ENCODE measurements at regions of chr22 and their contacts with region 1.

Region 1: DNA sequence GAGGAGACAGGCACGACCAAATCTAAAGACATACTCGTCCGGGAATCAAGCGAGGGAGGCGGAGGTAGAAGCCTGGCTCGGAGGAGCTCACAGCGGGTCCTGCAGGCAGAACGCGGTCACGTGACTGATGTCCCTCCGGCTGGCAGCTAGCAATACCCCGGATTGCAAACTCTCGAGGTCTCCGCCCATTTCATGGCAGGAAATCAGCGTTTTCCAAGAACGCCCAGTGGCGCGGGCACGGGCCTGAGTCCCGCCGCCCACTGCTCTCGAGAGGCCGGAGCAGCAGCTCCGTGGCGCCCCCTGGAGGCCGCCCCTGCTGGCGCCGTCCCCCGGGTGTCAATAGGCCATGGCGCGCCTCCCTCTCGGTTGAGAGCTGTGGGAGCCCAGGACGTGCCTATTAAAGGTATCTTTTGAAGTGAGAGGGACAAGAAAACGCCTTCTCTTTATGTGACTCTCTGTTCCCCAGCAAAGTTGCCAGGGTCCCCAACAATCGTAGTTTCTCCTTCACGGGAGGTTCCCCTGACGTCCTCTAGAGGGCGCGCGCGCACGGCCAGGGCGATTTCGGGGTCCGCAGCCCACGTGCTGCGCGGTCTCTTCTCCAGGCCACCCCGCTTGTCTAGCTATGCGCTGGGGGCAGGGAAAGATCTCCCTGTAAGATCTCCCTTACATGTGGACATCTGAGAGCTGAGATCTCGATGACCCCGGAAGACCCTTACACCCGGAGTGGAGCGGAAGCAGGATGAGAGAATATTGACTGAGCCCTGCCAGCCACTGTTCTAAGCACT is 37.3 kb upstream of the RBFOX2 start:
- DNase-seq: peak; percentile 91
- H3K4me3 Mint-ChIP-seq: peak overlapping the region; percentile 75
- H3K27ac Mint-ChIP-seq: peak overlapping the region; percentile 82
- H3K4me1 Mint-ChIP-seq: no peaks in the 10 kb centered on the region
- H3K27me3 Mint-ChIP-seq: no peaks in the 10 kb centered on the region
- CTCF ChIP-seq: peak; percentile 99

Region 2: DNA sequence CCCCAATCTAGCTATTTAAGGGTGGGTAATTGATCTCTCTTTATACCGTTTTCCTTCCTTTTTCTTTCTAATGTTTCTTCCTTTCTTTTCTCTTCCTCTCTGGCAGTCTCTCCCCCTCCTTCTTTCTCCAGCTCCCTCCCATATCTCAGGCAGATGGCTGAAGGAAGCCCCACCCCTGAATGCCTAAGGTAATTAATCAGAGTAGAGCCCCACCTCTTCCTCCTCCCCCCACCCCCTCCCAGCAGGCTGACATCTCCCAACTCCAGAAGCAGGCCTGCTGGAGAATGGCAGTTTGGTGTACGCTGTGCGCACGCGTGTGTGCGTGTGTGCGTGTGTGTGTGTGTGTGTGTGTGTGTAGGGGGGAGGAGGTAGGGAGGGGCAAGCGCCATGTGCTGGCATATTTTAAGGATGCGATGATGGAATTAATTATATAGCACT is 225.6 kb before region 1 on chr22:
- CTCF ChIA-PET with region 1: interaction called, 4 read pairs
- POLR2A ChIA-PET with region 1: interaction called, 3 read pairs
- intact Hi-C with region 1: loop called (anchors 5 kb)
- DNase-seq: peak; percentile 97
- H3K4me3 Mint-ChIP-seq: peak overlapping the region; percentile 84
- H3K27ac Mint-ChIP-seq: peak overlapping the region; percentile 83
- H3K4me1 Mint-ChIP-seq: peaks cover 55% of the 10 kb centered on the region
- H3K27me3 Mint-ChIP-seq: no peaks in the 10 kb centered on the region
- CTCF ChIP-seq: no peak

Region 3: DNA sequence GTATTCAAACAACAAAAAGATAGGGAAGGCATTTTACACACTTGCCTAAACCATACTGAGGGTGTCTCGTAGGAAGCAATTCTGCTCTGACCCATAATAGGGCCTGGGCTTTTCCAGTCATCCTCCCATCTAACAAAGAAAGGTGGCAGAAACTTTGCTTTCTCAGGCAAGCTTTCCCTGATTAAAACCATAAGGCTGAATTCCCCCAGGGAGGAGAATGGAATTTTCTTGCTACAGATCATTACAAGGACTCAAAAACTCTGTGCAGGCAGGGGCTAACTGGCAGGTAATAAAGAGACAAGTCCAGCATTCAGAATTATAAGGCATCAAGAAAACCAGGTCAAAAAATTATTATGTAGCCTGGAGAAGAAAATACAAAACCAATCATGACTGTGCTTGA is 127.7 kb before region 1 on chr22:
- CTCF ChIA-PET with region 1: interaction called, 21 read pairs
- POLR2A ChIA-PET with region 1: no interaction called
- intact Hi-C with region 1: no loop called
- DNase-seq: no peak
- H3K4me3 Mint-ChIP-seq: no peak overlapping the region
- H3K27ac Mint-ChIP-seq: no peak overlapping the region
- H3K4me1 Mint-ChIP-seq: no peaks in the 10 kb centered on the region
- H3K27me3 Mint-ChIP-seq: no peaks in the 10 kb centered on the region
- CTCF ChIP-seq: no peak

Region 4: GRCh38 chr22:36017651-36018091 is 48.3 kb before region 1 on chr22:
- CTCF ChIA-PET with region 1: interaction called, 28 read pairs
- POLR2A ChIA-PET with region 1: no interaction called
- intact Hi-C with region 1: no loop called
- DNase-seq: no peak
- H3K4me3 Mint-ChIP-seq: no peak overlapping the region
- H3K27ac Mint-ChIP-seq: no peak overlapping the region
- H3K4me1 Mint-ChIP-seq: peaks cover 11% of the 10 kb centered on the region
- H3K27me3 Mint-ChIP-seq: no peaks in the 10 kb centered on the region
- CTCF ChIP-seq: no peak

Region 5: DNA sequence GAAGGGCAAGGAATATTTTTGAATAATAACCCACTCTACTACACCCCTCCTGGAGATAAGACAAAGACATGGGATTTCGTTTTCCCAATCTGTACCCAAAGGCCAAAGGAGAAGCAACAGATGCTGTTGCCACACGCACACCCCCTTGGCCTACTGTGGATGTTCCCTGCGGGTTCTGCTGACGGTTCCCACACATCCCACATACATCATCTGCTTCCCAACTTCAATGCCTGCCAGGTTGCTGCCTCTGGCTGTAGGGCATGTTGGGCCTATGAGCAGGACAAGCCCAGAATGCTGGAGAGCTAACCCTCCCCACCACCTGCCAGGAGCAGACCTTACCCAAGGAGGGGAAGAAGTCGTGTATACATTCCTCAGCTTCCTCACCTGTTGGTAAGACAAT is 23.7 kb before region 1 on chr22:
- CTCF ChIA-PET with region 1: interaction called, 18 read pairs
- POLR2A ChIA-PET with region 1: no interaction called
- intact Hi-C with region 1: no loop called
- DNase-seq: no peak
- H3K4me3 Mint-ChIP-seq: no peak overlapping the region
- H3K27ac Mint-ChIP-seq: no peak overlapping the region
- H3K4me1 Mint-ChIP-seq: no peaks in the 10 kb centered on the region
- H3K27me3 Mint-ChIP-seq: peaks cover 6% of the 10 kb centered on the region
- CTCF ChIP-seq: no peak

Region 6: GRCh38 chr22:36088292-36088691 is 22.3 kb after region 1 on chr22:
- CTCF ChIA-PET with region 1: interaction called, 47 read pairs
- POLR2A ChIA-PET with region 1: no interaction called
- intact Hi-C with region 1: no loop called
- DNase-seq: no peak
- H3K4me3 Mint-ChIP-seq: no peak overlapping the region
- H3K27ac Mint-ChIP-seq: no peak overlapping the region
- H3K4me1 Mint-ChIP-seq: peaks cover 6% of the 10 kb centered on the region
- H3K27me3 Mint-ChIP-seq: no peaks in the 10 kb centered on the region
- CTCF ChIP-seq: no peak

Region 7: DNA sequence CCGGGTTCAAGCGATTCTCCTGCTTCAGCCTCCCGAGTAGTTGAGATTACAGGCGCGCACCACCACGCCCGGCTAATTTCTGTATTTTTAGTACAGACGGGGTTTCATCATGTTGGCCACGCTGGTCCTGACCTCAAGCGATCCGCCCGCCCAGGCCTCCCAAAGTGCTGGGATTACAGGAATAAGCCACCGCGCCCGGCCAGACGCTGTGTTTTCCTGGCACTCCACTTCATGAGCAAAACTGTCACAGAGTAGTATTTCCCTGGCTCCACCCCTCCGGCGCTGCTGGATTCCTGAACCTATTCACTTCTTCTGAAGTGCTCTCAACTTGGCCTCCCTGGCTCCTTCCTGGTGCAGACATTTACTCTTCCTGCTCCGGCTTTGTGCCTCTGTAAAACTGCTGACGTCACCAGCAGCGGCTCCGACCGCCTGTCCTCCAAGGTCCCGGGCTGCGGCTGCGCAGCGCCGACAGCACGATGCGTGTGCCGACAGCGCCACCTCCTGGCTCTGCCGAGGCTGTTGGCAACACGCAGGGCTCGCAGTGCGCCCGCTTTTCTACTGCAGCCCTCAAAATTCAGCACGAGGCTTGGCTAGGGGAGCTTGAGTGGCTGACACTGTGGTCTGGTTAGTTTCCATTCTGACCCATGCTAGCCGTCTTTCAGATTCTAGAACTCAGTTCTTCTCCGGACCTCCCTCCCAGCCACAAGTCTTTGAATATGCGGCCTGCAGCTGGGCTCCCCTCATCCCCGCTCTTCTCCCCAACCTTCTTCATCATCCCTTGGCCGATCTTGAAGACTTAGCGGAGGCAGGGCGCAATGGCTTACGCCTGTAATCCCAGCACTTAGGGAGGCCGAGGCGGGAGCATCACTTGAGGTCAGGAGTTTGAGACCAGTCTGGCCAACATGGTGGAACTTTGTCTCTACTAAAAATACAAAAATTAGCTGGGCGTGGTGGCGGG is 58.0 kb after region 1 on chr22:
- CTCF ChIA-PET with region 1: interaction called, 12 read pairs
- POLR2A ChIA-PET with region 1: no interaction called
- intact Hi-C with region 1: loop called (anchors 1 kb)
- DNase-seq: peak; percentile 88
- H3K4me3 Mint-ChIP-seq: peak overlapping the region; percentile 66
- H3K27ac Mint-ChIP-seq: peak overlapping the region; percentile 73
- H3K4me1 Mint-ChIP-seq: peaks cover 9% of the 10 kb centered on the region
- H3K27me3 Mint-ChIP-seq: peaks cover 28% of the 10 kb centered on the region
- CTCF ChIP-seq: peak; percentile 93

Region 8: DNA sequence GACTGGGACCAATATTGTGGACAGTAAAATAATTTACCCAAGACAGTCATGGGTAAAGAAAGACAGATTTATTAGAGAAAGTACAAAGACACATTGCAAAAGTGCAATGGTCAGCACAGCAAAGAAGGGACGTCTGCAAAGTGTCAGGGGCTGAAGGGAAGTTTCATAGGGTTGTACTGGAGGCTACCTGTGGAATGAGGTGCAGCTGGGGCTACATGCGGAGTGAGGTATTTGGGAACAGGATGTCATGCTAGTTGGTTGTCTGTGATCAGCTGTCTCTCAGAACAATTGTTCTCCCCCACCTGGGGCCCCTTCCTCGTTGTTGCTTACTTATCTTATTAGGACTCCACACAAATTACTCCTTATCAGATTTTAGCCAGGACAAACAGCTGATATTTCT is 106.0 kb after region 1 on chr22:
- CTCF ChIA-PET with region 1: no interaction called
- POLR2A ChIA-PET with region 1: no interaction called
- intact Hi-C with region 1: no loop called
- DNase-seq: no peak
- H3K4me3 Mint-ChIP-seq: no peak overlapping the region
- H3K27ac Mint-ChIP-seq: no peak overlapping the region
- H3K4me1 Mint-ChIP-seq: no peaks in the 10 kb centered on the region
- H3K27me3 Mint-ChIP-seq: peaks cover 3% of the 10 kb centered on the region
- CTCF ChIP-seq: no peak